AG04449 (cell line): ENCODE measurements at regions of chr11 and their contacts with region 1.

Region 1: DNA sequence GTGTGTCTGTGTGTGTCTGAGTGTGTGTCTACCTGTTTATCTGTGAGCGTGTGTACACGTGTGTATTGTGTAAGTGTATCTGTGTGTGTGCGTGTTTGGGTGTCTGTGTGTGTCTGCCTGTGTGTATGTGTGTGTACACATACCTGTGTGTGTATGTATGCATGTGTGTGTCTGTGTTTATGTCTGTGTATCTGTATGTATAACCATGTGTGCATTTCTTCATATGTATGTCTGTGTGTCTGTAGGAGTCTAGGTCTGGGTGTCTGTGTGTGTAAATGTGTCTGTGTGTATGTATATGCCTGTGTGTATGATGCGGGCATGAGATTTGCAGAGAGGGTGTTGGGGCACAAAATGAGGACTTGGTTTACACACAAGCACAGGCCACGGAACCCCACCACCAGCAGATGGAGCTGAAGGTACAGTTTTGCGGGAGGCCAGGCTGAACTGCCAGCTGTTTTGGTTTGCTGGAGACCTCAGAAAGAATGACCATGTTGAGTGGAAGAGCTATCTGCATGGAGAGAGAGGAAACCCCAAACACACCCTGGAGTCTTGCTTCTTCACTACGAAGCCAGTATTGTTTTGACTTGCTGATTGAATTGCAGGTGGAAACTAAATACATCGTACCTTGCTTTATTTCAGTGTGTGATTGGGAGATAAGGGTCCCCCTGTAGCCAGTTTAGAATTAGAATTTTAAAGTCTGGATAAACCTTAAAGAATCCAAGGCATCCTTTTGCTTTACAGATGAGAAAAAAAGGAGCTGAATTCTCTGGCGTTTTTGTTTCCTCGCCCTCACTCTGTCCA is 497.2 kb downstream of the NTM start:
- DNase-seq: peak; percentile 47
- H3K4me3 ChIP-seq: no peak overlapping the region
- CTCF ChIP-seq: peak; percentile 90

Region 2: GRCh38 chr11:131811383-131811782 is 56.3 kb before region 1 on chr11:
- CTCF ChIA-PET with region 1: no interaction called
- POLR2A ChIA-PET with region 1: no interaction called
- DNase-seq: no peak
- H3K4me3 ChIP-seq: no peak overlapping the region
- CTCF ChIP-seq: no peak

Region 3: DNA sequence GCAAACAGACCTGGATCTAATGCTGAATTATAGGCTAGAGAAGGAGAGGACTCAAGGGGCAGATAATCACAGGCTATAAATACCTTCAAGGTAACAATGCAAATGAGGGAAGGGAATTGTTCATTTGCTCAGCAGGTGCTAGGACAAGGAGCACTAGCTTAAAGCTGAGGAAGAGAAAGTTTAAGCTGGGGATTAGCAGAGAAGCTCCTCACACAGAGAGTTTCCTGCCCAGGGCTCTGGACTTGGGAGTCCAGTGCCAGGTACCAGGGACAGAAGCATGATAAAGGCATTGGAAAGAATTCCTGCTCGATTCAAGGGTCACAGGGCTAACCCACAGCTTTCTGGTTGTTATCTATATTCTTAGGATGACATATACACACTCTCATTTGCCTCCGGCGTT is 12.7 kb after region 1 on chr11:
- CTCF ChIA-PET with region 1: interaction called, 40 read pairs
- POLR2A ChIA-PET with region 1: no interaction called
- DNase-seq: no peak
- H3K4me3 ChIP-seq: no peak overlapping the region
- CTCF ChIP-seq: no peak

Region 4: DNA sequence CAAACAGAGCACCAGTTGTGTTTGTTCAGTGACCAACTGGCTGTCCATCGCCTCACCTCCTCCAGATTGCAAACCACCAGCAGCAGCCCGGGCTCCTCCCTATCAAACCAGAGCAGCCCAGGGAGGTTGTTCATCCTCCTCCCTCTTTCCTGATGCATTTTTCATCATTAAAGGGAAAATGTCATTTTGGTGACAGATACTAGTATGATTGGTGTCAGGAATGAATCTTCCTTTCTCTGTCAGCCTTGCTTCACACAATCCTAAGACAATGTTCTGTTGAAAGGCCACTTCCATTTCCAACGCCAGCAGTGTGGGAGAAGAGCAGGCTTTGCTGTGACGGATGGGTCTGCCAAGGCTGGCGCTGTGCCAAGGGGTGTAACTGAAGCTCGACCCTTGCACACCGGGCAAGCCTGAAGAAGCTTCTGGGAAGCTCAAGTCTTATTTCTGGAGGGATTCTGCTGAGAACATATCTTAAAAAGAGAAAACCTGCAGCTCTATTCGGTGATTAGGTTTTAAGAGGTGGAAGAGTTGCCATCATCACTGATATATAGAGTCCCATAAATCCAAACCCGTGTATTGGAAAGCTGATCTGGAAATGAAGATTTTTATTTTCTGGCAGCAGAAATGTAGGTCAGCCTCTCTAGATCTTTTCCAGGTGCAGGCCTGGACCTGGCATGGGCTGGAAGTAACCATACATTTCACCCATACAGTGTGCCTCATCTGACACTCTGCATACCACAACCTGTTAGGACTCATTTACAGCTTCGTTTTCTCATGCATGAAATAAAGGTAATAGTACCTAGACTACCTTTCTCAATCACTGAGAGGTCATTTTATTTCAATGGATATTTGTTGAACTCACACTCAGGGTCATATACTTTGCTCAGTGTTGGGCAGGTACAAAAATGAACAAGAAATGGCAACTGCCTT is 27.2 kb after region 1 on chr11:
- CTCF ChIA-PET with region 1: interaction called, 27 read pairs
- POLR2A ChIA-PET with region 1: no interaction called
- DNase-seq: no peak
- H3K4me3 ChIP-seq: no peak overlapping the region
- CTCF ChIP-seq: no peak

Region 5: DNA sequence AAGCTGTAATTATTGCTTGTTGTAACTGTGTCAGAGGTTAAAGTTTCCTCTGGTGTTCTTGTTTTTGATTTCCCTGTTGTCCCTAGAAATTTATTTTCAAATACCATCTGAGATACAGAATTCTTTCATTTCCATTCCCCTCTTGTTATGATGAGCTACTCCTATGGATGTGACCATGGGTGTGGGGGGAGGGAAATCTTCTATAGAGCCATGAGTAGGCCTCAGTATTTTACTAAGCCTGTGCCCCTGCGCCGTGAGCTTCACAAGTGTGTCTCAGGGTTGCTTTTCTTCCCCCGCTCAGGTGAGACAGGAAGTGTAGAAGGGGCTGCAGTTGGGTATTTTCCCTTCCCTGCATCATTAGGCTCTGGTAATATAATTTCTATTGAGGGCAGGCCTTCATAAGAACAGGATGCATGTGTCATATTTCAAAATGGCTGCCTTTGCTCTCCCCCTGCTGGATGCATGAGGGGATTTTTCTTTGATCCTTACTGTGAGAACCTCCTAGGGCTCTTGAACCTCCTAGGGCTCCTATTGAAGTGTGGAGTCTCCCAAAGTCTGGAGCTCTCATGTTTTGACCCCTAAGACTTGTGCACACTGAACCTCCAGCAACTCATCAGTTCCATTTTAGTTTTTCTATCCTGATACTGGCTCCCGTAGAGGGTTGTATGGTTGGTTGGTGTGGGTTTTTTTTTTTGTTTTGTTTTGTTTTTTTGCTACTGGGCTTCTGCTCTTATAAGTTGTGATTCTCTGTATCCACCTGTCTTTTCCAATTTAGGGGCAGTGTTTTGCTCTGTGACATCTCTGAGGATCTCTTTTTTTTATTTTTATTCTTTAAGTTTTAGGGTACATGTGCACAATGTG is 161.0 kb after region 1 on chr11:
- CTCF ChIA-PET with region 1: interaction called, 16 read pairs
- POLR2A ChIA-PET with region 1: no interaction called
- DNase-seq: no peak
- H3K4me3 ChIP-seq: no peak overlapping the region
- CTCF ChIP-seq: peak; percentile 61

Region 6: GRCh38 chr11:133064152-133064877 is 1196.7 kb after region 1 on chr11:
- CTCF ChIA-PET with region 1: interaction called, 10 read pairs
- POLR2A ChIA-PET with region 1: no interaction called
- DNase-seq: peak; percentile 23
- H3K4me3 ChIP-seq: peak overlapping the region; percentile 71
- CTCF ChIP-seq: peak; percentile 96